RWPE1 (cell line): ENCODE measurements at regions of chr10 and their contacts with region 1.

Region 1: DNA sequence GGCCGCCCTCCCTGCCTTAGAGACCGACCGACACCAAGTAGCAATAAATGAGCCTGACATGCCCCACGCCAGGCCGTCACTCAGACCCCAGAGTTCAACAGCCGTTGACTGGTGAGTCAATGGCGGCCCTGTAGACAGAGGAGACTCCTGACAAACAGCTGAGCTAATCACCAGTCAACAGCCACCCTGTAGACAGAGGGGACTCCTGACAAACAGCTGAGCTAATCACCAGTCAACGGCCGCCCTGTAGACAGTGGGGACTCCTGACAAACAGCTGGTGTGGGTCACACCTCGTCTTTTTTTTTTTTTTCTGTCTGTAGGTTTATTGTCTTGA is 16.9 kb upstream of the KNDC1 start:
- DNase-seq: no peak
- H3K27ac ChIP-seq: no peak overlapping the region
- CTCF ChIP-seq: no peak

Region 2: GRCh38 chr10:133072720-133073390 is 70.3 kb before region 1 on chr10:
- CTCF ChIA-PET with region 1: no interaction called
- POLR2A ChIA-PET with region 1: no interaction called
- DNase-seq: no peak
- H3K27ac ChIP-seq: no peak overlapping the region
- CTCF ChIP-seq: no peak

Region 3: GRCh38 chr10:133159950-133160819 is 17.0 kb after region 1 on chr10 and contains the start of gene KNDC1:
- CTCF ChIA-PET with region 1: interaction called, 12 read pairs
- POLR2A ChIA-PET with region 1: no interaction called
- DNase-seq: peak; percentile 75
- H3K27ac ChIP-seq: no peak within 1 kb of the TSS
- CTCF ChIP-seq: no peak

Region 4: GRCh38 chr10:133226251-133226808 is 83.2 kb after region 1 on chr10:
- CTCF ChIA-PET with region 1: interaction called, 29 read pairs
- POLR2A ChIA-PET with region 1: no interaction called
- DNase-seq: peak; percentile 54
- H3K27ac ChIP-seq: no peak overlapping the region
- CTCF ChIP-seq: no peak